Caco-2 (cell line): ENCODE measurements at regions of chr19 and their contacts with region 1.

Region 1: GRCh38 chr19:54481322-54481930 is 8.3 kb upstream of the CDC42EP5 start:
- DNase-seq: peak in 1 of 2 experiments; percentile 67
- H3K4me3 ChIP-seq: no peak overlapping the region
- H3K4me3 Mint-ChIP-seq: no peak overlapping the region
- H3K27ac Mint-ChIP-seq: no peak overlapping the region
- H3K4me1 ChIP-seq: 0 out of 2 replicates have a peak, but pooled peaks cover 5% of the 10 kb centered on the region
- H3K4me1 Mint-ChIP-seq: peaks cover 7% of the 10 kb centered on the region
- H3K27me3 ChIP-seq: no peaks in the 10 kb centered on the region
- H3K27me3 Mint-ChIP-seq: peaks cover 18% of the 10 kb centered on the region
- CTCF ChIP-seq: peak; percentile 76 to 81

Region 2: GRCh38 chr19:54325194-54325621 is 156.2 kb before region 1 on chr19:
- CTCF ChIA-PET with region 1: interaction called, 10 read pairs
- POLR2A ChIA-PET with region 1: no interaction called
- intact Hi-C with region 1: no loop called
- DNase-seq: peak in 1 of 2 experiments; percentile 52
- H3K4me3 ChIP-seq: no peak overlapping the region
- H3K4me3 Mint-ChIP-seq: no peak overlapping the region
- H3K27ac Mint-ChIP-seq: no peak overlapping the region
- H3K4me1 ChIP-seq: no peaks in the 10 kb centered on the region
- H3K4me1 Mint-ChIP-seq: no peaks in the 10 kb centered on the region
- H3K27me3 ChIP-seq: no peaks in the 10 kb centered on the region
- H3K27me3 Mint-ChIP-seq: peaks cover 12% of the 10 kb centered on the region
- CTCF ChIP-seq: peak; percentile 59 to 80

Region 3: GRCh38 chr19:54430306-54431254 is 50.8 kb before region 1 on chr19:
- CTCF ChIA-PET with region 1: interaction called, 4 read pairs
- POLR2A ChIA-PET with region 1: no interaction called
- intact Hi-C with region 1: loop called (anchors 1 kb)
- DNase-seq: peak; percentile 71 to 77
- H3K4me3 ChIP-seq: peak overlapping the region; percentile 34
- H3K4me3 Mint-ChIP-seq: peak overlapping the region; percentile 60
- H3K27ac Mint-ChIP-seq: no peak overlapping the region
- H3K4me1 ChIP-seq: no peaks in the 10 kb centered on the region; the same call in 1 of the 2 replicates
- H3K4me1 Mint-ChIP-seq: peaks cover 9% of the 10 kb centered on the region
- H3K27me3 ChIP-seq: no peaks in the 10 kb centered on the region
- H3K27me3 Mint-ChIP-seq: peaks cover 9% of the 10 kb centered on the region
- CTCF ChIP-seq: peak; percentile 17 to 42

Region 4: GRCh38 chr19:54517483-54517882 is 36.1 kb after region 1 on chr19:
- CTCF ChIA-PET with region 1: no interaction called
- POLR2A ChIA-PET with region 1: no interaction called
- intact Hi-C with region 1: no loop called
- DNase-seq: peak; percentile 71 to 81
- H3K4me3 ChIP-seq: no peak overlapping the region
- H3K4me3 Mint-ChIP-seq: no peak overlapping the region
- H3K27ac Mint-ChIP-seq: no peak overlapping the region
- H3K4me1 ChIP-seq: no peaks in the 10 kb centered on the region
- H3K4me1 Mint-ChIP-seq: peaks cover 2% of the 10 kb centered on the region
- H3K27me3 ChIP-seq: no peaks in the 10 kb centered on the region
- H3K27me3 Mint-ChIP-seq: peaks cover 21% of the 10 kb centered on the region
- CTCF ChIP-seq: no peak

Region 5: DNA sequence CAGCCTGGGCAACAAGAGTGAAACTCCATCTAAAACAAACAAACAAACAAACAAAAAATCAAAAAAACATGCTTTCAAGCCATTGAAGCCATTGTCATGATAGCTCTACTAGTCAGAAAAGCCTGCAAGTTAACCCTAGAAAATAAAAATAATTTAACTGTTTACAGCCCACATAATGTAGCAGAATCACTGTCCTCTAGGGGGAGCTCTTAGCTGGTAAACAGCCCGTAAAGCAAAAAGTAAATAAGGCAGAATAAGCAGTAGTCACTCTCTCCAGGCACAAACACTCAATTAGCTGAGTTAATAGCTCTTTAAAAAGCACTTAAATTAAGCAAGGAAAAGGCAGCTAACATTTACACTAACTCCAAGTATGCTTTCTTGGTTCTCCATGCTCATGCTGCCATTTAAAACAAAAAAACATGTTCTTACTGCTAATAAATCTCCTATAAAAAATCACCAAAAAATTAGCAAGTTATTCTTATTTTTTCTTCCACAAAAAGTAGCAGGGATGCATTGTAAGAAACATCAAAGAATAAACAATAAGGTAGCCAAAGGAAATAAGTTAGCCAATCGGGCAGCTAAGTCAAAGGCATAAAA is 192.7 kb after region 1 on chr19:
- CTCF ChIA-PET with region 1: interaction called, 10 read pairs
- POLR2A ChIA-PET with region 1: no interaction called
- intact Hi-C with region 1: loop called (anchors 2 kb)
- DNase-seq: peak in 1 of 2 experiments; percentile 23
- H3K4me3 ChIP-seq: no peak overlapping the region
- H3K4me3 Mint-ChIP-seq: no peak overlapping the region
- H3K27ac Mint-ChIP-seq: no peak overlapping the region
- H3K4me1 ChIP-seq: no peaks in the 10 kb centered on the region
- H3K4me1 Mint-ChIP-seq: no peaks in the 10 kb centered on the region
- H3K27me3 ChIP-seq: no peaks in the 10 kb centered on the region; the same call in 1 of the 2 replicates
- H3K27me3 Mint-ChIP-seq: peaks cover 8% of the 10 kb centered on the region
- CTCF ChIP-seq: peak; percentile 45 to 60